AG04450 (cell line): ENCODE measurements at regions of chr20 and their contacts with region 1.

Region 1: GRCh38 chr20:561437-562231 is 18.0 kb upstream of the CSNK2A1 start:
- DNase-seq: peak; percentile 16
- H3K4me3 ChIP-seq: no peak overlapping the region
- H3K27ac ChIP-seq: no peak overlapping the region
- H3K27me3 ChIP-seq: peaks cover 16% of the 10 kb centered on the region
- CTCF ChIP-seq: peak; percentile 100

Region 2: DNA sequence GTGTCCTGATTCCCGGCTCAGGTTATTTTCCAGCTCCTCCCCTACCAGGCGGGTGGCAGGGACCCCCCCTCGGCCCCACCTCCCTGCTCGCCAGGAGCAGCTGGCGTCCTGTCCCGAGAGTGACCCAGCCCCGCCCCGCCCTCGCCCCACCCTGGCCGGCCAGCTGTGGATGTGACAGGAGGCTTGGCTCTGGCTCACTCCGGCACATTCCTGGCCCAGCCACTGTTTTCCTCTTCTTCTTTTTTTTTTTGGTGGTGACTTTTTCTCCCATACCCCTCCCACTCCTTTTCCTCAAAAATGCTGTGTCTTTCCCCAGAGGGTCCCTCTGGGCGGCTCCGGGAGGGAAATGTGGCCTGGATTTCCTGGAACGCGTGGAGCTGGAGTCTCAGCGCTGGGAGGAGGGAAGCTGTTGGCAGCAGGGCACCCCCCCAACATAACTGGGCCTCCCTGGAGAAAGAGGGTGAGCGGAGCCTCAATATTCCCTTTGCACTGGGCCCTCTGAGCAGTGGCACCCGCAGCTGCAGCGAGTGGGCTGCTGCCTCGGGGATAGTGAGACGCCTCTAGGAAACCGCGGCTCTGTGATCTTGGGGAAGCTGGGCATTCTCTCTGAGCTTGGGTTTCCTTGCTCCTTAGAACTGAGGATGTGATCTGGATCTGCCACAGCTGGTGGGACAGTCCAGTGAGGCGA is 10.3 kb after region 1 on chr20:
- CTCF ChIA-PET with region 1: interaction called, 20 read pairs
- POLR2A ChIA-PET with region 1: no interaction called
- DNase-seq: no peak
- H3K4me3 ChIP-seq: no peak overlapping the region
- H3K27ac ChIP-seq: no peak overlapping the region
- H3K27me3 ChIP-seq: peaks cover 37% of the 10 kb centered on the region
- CTCF ChIP-seq: no peak

Region 3: GRCh38 chr20:667391-667964 is 105.8 kb after region 1 on chr20:
- CTCF ChIA-PET with region 1: interaction called, 30 read pairs
- POLR2A ChIA-PET with region 1: no interaction called
- DNase-seq: no peak
- H3K4me3 ChIP-seq: no peak overlapping the region
- H3K27ac ChIP-seq: no peak overlapping the region
- H3K27me3 ChIP-seq: peaks cover 66% of the 10 kb centered on the region
- CTCF ChIP-seq: peak; percentile 88